MCF 10A (cell line): ENCODE measurements at regions of chr22 and their contacts with region 1.

Region 1: GRCh38 chr22:39215426-39216120 is 29.2 kb downstream of the PDGFB start:
- DNase-seq: no peak
- H3K4me3 Mint-ChIP-seq: no peak overlapping the region
- H3K27ac Mint-ChIP-seq: no peak overlapping the region
- H3K4me1 Mint-ChIP-seq: peaks cover 29% of the 10 kb centered on the region
- H3K27me3 Mint-ChIP-seq: no peaks in the 10 kb centered on the region
- CTCF ChIP-seq: peak; percentile 13

Region 2: GRCh38 chr22:39240828-39241793 is 25.5 kb after region 1 on chr22:
- CTCF ChIA-PET with region 1: no interaction called
- POLR2A ChIA-PET with region 1: interaction called, 16 read pairs
- intact Hi-C with region 1: no loop called
- DNase-seq: no peak
- H3K4me3 Mint-ChIP-seq: peak overlapping the region; percentile 45
- H3K27ac Mint-ChIP-seq: no peak overlapping the region
- H3K4me1 Mint-ChIP-seq: peaks cover 37% of the 10 kb centered on the region
- H3K27me3 Mint-ChIP-seq: peaks cover 34% of the 10 kb centered on the region
- CTCF ChIP-seq: no peak